Activated B cell treated with CpG ODN at 0.5 μM for 24 hours (primary cell): ENCODE measurements at regions of chr2 and their contacts with region 1.

Region 1: DNA sequence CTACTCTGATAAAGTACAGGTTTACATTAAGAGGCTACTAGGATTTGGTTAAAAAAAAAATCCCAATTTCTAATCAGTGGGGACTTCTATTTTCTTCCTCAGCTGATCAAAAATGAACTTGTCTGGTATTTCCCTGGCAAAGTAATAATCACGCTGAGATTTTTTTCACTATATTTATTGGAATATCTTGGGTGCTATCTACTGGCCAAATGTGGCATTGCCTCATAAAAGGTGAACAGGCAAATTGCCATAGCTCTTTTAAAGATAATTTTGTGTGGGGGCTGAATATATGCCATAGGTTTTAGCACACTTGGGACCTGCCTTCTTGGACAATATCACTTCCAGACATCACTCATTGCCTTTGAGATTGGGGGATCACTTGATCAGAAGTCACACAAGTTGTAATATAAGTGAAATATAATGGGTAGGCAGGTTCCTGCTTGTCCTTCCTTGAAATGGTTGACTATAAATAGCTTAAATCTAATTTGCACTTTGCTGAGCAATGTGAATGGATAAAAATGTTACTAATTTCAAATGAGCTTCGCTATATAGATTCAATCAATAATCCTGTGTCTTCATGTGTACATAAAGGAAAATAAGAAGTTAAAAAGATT is 7.0 kb upstream of the NXPH2 start:
- DNase-seq: no peak
- ATAC-seq: no peak
- H3K4me3 Mint-ChIP-seq: no peak overlapping the region
- H3K27ac Mint-ChIP-seq: no peak overlapping the region
- H3K4me1 Mint-ChIP-seq: no peaks in the 10 kb centered on the region
- H3K27me3 Mint-ChIP-seq: peaks cover 11% of the 10 kb centered on the region
- CTCF ChIP-seq: no peak

Region 2: DNA sequence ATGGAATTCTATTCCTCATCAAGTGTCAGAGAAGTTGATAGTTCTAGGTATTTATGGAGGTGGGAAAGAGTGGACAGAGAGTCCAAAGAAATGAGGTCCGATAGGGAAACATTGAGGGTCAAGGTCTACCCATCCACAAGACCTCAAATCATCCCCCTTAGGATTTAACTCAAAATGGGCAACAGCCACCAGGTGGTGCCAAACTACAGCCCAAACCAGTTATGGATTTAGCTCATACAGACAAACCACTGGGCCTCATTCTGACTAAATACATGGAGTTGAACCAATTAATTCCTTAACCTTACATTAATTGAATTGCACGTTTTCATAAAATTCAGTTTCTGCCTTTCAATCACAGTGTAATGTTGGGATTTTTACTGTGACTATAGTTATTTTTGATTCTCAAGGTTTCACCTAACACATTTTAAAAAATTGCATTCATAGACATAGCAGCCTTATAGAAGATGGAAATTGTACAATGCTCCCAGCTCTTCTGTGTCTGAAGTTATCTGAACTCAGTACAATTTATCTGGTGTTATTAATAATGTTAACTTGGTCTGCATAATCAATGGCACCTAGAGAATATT is 921.1 kb before region 1 on chr2:
- CTCF ChIA-PET with region 1: interaction called, 32 read pairs
- POLR2A ChIA-PET with region 1: no interaction called
- intact Hi-C with region 1: loop called (anchors 1 kb)
- DNase-seq: peak; percentile 19
- ATAC-seq: peak; percentile 28
- H3K4me3 Mint-ChIP-seq: no peak overlapping the region
- H3K27ac Mint-ChIP-seq: no peak overlapping the region
- H3K4me1 Mint-ChIP-seq: no peaks in the 10 kb centered on the region
- H3K27me3 Mint-ChIP-seq: no peaks in the 10 kb centered on the region
- CTCF ChIP-seq: no peak

Region 3: DNA sequence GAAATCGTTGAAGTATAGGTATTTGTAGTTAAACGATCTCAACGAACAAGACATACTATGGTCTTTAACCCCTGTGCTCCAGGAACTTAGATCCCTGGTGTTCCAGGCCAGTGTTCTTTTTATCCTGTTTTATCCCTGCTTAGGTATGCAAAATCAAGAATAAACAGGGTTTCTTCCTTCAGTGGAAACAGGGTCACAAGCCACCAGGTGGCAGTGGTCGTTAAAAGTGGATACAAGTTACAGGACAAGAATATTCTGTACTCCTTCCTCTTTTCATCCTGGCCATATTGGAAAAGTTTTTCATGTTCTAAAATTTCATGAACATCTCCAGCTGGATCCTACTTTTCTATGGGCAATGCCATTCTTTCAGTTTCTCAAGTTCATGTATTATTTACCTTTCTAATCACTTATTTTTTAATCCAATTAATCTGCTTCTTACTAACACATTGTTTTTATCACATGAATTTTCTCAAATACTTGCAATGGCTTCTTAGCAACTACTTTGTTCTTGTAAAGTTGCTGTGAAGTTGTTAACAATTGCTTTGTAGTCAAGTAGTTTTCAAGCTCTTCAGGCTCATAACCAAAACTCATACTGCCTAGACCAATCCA is 839.3 kb before region 1 on chr2:
- CTCF ChIA-PET with region 1: interaction called, 9 read pairs
- POLR2A ChIA-PET with region 1: no interaction called
- intact Hi-C with region 1: loop called (anchors 1 kb)
- DNase-seq: no peak
- ATAC-seq: no peak
- H3K4me3 Mint-ChIP-seq: no peak overlapping the region
- H3K27ac Mint-ChIP-seq: no peak overlapping the region
- H3K4me1 Mint-ChIP-seq: peaks cover 7% of the 10 kb centered on the region
- H3K27me3 Mint-ChIP-seq: no peaks in the 10 kb centered on the region
- CTCF ChIP-seq: no peak

Region 4: GRCh38 chr2:138373993-138374408 is 413.2 kb before region 1 on chr2:
- CTCF ChIA-PET with region 1: interaction called, 3 read pairs
- POLR2A ChIA-PET with region 1: no interaction called
- intact Hi-C with region 1: loop called (anchors 1 kb)
- DNase-seq: no peak
- ATAC-seq: no peak
- H3K4me3 Mint-ChIP-seq: no peak overlapping the region
- H3K27ac Mint-ChIP-seq: no peak overlapping the region
- H3K4me1 Mint-ChIP-seq: no peaks in the 10 kb centered on the region
- H3K27me3 Mint-ChIP-seq: no peaks in the 10 kb centered on the region
- CTCF ChIP-seq: no peak

Region 5: GRCh38 chr2:138486363-138487198 is 300.6 kb before region 1 on chr2:
- CTCF ChIA-PET with region 1: interaction called, 11 read pairs
- POLR2A ChIA-PET with region 1: no interaction called
- intact Hi-C with region 1: no loop called
- DNase-seq: no peak
- ATAC-seq: no peak
- H3K4me3 Mint-ChIP-seq: no peak overlapping the region
- H3K27ac Mint-ChIP-seq: no peak overlapping the region
- H3K4me1 Mint-ChIP-seq: no peaks in the 10 kb centered on the region
- H3K27me3 Mint-ChIP-seq: no peaks in the 10 kb centered on the region
- CTCF ChIP-seq: no peak

Region 6: DNA sequence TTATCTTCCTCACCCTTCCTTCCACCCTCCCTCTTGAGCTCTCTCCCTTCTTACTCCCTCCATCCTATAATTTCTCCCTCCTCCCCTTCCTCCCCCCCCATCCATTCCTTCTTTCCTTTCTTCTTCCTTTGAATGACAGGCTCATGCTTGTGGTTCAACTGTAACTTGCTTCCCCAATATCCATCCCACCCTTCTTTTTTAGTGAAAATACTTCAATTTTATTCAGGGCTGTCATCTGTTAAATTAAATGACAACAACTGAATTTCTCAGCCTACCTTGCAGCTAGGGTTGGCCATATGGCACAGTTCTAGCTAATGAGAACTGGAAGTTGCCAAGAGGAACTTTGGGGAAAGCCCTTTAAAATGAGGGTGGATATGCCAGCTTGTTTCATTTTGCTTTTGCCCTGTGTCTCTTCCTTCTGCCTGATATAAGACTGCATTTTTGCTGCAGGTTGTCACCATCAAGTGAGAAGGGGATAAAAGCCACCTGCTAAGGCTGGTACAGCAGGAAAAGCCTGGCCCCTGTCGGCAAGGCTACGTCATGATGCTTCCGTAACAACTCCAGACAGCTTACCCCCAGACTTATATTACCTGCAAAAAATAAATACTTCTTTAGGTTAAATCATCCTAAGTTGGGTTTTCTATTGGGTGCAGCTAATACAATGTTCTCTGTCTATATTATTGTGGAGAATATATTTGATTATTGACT is 128.8 kb before region 1 on chr2:
- CTCF ChIA-PET with region 1: no interaction called
- POLR2A ChIA-PET with region 1: no interaction called
- intact Hi-C with region 1: no loop called
- DNase-seq: no peak
- ATAC-seq: no peak
- H3K4me3 Mint-ChIP-seq: no peak overlapping the region
- H3K27ac Mint-ChIP-seq: no peak overlapping the region
- H3K4me1 Mint-ChIP-seq: no peaks in the 10 kb centered on the region
- H3K27me3 Mint-ChIP-seq: peaks cover 10% of the 10 kb centered on the region
- CTCF ChIP-seq: no peak